ENCODE measurements at regions of chr21 and their contacts with region 1.

Region 1: GRCh38 chr21:16211339-16212303 is 481.8 kb downstream of the USP25 start:
- DNase-seq: no peak
- ATAC-seq: peak; percentile 86 to 92
- H3K4me3 ChIP-seq: peak overlapping the region; percentile 39 to 58 (median 48)
- H3K27ac ChIP-seq: peak overlapping the region; percentile 83 to 93 (median 87)
- H3K4me1 ChIP-seq: peaks cover 6 to 34% of the 10 kb centered on the region in 2 donors
- H3K27me3 ChIP-seq: no peaks in the 10 kb centered on the region
- CTCF ChIP-seq: no peak
- POLR2A ChIP-seq: peak in 1 of 2 donors; percentile 60

Region 2: GRCh38 chr21:16169102-16169511 is 42.5 kb before region 1 on chr21:
- in situ Hi-C with region 1: no loop called
- intact Hi-C with region 1: no loop called
- DNase-seq: no peak
- ATAC-seq: no peak
- H3K4me3 ChIP-seq: no peak overlapping the region
- H3K27ac ChIP-seq: peak overlapping the region in 1 of 4 donors; percentile 4
- H3K4me1 ChIP-seq: no peaks in the 10 kb centered on the region
- H3K27me3 ChIP-seq: no peaks in the 10 kb centered on the region
- CTCF ChIP-seq: no peak
- POLR2A ChIP-seq: no peak

Region 3: DNA sequence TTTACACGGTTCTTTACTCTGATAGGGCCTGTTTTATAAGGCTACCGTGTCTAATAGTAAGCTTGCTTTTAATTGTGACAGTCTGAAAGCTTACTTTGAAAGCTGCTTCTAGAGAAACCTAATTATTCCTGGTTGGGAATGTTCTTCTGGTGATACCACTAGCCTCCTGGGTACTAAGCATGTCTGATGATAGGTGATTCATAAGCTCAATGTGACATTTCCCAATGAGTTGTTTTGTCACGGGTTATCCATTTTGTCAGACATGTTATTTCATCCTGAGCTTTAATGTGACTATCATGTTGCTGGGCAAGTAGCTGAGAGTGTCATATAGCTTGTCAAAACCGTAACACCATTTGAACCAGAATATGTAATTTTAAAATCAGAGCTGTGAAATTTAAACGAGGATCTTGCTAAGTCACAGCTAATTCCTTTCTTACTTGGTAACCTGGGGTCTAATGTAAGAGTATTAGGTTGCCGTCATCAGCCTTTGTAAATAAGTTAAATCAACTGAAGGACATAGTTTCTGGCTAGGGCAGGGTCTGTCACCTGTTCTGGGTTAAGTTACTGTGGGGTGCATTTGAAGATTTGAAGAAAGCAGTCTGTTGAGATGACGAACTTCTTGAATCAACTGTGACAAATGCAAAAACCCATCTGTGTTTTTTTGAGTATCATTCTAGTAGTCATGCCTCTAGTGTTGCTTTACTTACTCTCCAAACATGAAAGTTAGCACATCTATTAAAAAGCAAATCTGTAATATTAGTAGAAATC is 47.4 kb after region 1 on chr21:
- in situ Hi-C with region 1: no loop called
- intact Hi-C with region 1: loop called (anchors 5 kb)
- DNase-seq: peak; percentile 22 to 27
- ATAC-seq: peak; percentile 98 to 99
- H3K4me3 ChIP-seq: peak overlapping the region; percentile 15 to 34 (median 31)
- H3K27ac ChIP-seq: peak overlapping the region; percentile 72 to 90 (median 83)
- H3K4me1 ChIP-seq: peaks cover 15 to 31% of the 10 kb centered on the region in 2 donors
- H3K27me3 ChIP-seq: no peaks in the 10 kb centered on the region
- CTCF ChIP-seq: no peak
- POLR2A ChIP-seq: peak; percentile 19 to 73

Region 4: DNA sequence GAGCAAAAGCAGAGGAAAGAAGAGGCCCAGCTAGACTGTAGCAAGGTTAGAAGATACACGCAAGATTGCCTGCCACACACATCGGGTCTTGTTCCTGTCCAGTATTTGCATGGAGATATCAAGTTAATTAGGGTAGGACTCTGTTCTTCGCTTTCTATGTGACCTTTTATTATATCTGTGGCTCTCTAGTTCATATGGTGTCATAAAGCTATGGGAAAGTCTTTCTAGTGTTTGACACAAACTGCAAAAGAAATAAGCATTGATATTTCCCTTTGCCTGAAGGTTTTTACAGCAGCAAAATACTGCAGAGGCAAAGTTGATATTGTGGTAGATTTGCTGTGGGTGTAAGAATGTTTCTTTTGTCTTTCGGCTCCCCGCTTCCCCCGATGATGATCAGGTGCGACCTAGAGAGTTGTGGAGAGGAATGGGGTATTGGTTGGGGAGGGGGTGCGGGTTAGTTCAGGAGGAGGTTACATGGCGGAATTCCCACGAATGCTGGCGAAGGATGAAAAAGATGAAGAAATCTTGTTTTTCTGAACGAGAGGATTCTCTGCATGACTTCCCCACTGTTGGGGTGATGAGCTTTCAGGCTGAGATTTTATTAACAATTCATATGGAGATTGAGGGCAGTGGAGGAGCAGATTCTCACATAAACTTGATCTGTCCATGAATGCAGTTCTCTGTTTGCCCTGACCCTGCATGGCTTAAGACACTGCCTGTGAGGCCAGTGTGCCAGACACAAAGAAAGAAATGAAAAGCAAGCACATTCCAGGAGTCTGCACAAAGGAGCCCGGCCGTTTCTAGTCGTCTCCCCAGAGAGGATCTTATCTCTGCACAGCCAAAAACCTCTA is 68.3 kb after region 1 on chr21:
- in situ Hi-C with region 1: no loop called
- intact Hi-C with region 1: loop called (anchors 5 kb)
- DNase-seq: peak; percentile 30 to 51
- ATAC-seq: peak; percentile 68 to 86
- H3K4me3 ChIP-seq: peak overlapping the region; percentile 49 to 51 (median 50)
- H3K27ac ChIP-seq: peak overlapping the region; percentile 78 to 87 (median 82)
- H3K4me1 ChIP-seq: peaks cover 17 to 25% of the 10 kb centered on the region in 2 donors
- H3K27me3 ChIP-seq: no peaks in the 10 kb centered on the region
- CTCF ChIP-seq: peak in 2 of 5 experiments; percentile 12 to 24
- POLR2A ChIP-seq: no peak

Region 5: GRCh38 chr21:16713331-16714117 is 501.9 kb after region 1 on chr21:
- in situ Hi-C with region 1: no loop called
- intact Hi-C with region 1: no loop called
- DNase-seq: no peak
- ATAC-seq: peak in 1 of 2 donors; percentile 39
- H3K4me3 ChIP-seq: no peak overlapping the region
- H3K27ac ChIP-seq: no peak overlapping the region
- H3K4me1 ChIP-seq: no peaks in the 10 kb centered on the region
- H3K27me3 ChIP-seq: no peaks in the 10 kb centered on the region
- CTCF ChIP-seq: no peak
- POLR2A ChIP-seq: no peak

Measured in gastrocnemius medialis (tissue), 4 donors.